Breast epithelium (tissue), 4 donors: ENCODE measurements at regions of chr9 and their contacts with region 1.

Region 1: DNA sequence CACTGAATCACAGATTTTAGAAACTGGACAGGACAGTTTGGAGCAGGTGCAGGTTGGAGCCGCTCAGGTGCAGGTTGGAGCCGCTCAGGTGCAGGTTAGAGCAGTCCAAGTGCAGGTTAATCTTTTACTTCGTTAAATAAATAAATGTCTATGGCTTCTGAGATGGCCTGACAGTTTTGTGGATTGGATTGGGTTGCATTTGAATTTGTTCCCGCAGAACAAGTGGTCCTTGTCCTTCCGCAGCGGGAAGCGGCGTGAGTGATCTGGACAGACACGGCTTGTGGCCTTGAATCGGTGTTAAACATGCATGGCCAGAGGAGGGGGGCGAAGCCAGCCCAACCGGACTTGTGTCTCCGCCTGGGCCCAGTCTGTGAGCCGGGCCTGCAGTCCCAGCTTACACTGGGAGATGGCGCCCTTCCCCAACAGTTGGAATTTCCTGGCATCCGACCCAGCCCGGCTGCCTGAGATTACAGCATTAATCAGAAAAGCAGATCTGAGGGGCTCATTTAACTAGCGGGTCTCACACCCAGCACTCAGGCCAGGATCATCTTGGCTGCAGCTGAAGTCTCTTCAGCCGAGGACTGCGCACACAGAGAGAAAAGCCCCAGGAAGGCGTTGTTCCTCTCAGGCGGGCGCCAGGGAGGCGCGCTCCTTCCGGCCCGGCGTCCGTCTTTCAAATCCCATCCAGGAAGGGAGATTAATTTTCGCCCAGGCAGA is 1.5 kb upstream of the OLFM1 start:
- DNase-seq: peak; percentile 64 to 81
- H3K4me3 ChIP-seq: peak overlapping the region; percentile 31 to 72 (median 49)
- H3K27ac ChIP-seq: no peak overlapping the region
- H3K4me1 ChIP-seq: peaks cover 0 to 11% of the 10 kb centered on the region in 2 donors
- H3K27me3 ChIP-seq: peaks cover 0 to 29% of the 10 kb centered on the region in 2 donors
- CTCF ChIP-seq: peak; percentile 78 to 97 (median 96)
- POLR2A ChIP-seq: no peak

Region 2: DNA sequence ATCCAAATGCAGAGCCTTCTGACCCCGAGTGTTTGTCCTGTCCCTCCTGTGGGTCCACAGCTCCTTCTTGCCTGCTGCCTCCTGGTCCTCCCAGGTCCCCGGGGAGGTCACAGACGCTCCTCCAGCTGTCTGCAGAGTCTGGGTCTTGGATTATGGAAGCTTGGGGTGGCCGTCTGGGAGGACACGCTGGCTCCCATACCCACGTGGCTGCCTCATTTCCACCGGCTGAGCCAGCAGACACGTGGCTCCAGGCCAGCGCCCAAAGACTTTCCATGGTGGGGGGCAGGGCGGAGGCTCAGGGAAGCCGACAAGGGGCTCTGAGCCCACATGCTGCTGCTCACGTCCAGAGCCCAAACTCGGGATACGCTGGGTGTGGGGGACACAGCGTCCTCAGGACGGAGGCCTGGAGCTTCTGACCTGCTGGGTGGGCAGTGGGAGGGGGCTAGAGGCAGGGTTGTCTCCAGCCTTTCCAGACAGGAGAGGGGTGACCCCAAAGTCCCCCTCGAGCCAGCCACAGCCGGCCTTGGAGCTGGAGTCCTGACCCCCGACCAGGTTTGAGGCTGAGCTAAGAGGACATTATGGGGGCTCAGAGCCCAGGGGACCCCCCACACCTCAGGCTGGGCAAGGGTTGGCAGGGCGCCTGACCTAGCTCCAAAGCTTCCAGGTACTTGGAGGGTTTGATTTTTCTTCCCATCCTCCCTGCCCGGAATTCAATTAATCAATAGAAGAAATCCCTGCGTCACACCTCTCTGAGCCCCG is 897.4 kb before region 1 on chr9:
- intact Hi-C with region 1: no loop called
- DNase-seq: no peak
- H3K4me3 ChIP-seq: peak overlapping the region in 1 of 3 donors; percentile 40
- H3K27ac ChIP-seq: no peak overlapping the region
- H3K4me1 ChIP-seq: no peaks in the 10 kb centered on the region
- H3K27me3 ChIP-seq: no peaks in the 10 kb centered on the region
- CTCF ChIP-seq: no peak
- POLR2A ChIP-seq: no peak

Region 3: DNA sequence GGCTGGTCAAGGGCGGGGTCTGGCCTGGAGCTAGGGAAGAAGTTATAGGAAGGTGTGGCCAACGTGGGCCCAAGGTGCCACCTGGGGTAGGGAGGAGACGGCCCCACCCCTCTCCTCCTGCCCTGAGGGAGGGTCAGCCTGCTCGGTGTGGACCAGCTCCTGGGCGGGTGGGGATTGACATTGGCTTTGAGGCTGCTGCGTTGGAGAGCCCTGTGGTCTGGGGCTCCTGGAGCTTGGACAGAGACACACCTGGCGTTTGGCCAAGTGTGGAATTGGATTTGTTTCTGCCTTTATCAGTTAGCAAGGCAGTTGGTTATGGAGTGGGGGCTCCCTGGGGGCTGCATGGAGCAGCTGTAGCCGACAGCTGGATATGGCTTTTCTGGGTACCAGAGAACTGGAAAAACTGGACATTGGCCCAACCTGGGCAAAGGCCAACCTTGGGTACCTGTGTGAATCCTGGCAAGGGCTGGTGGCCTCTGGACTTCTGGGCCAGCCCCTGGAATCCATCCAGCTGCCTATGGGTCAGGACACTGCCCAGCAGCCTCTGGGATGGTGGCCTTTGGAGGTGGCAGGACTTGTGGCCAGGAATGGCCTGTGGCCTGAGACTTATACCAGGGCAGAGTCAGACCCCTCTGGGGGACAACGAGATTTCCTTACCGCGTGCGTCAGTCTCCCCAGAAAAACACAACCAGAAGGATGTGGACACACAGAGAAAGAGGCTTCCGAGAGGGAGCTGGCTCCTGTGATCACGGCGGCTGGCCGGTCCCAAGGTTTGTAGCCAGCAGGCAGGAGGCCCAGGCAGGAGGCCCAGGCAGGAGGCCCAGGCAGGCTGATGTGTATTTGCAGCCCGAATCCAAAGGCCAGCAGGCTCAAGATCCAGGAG is 318.1 kb after region 1 on chr9:
- intact Hi-C with region 1: loop called (anchors 10 kb)
- DNase-seq: no peak
- H3K4me3 ChIP-seq: no peak overlapping the region
- H3K27ac ChIP-seq: no peak overlapping the region
- H3K4me1 ChIP-seq: no peaks in the 10 kb centered on the region
- H3K27me3 ChIP-seq: peaks cover 0 to 23% of the 10 kb centered on the region in 2 donors
- CTCF ChIP-seq: no peak
- POLR2A ChIP-seq: no peak